AG04449 (cell line): ENCODE measurements at regions of chr14 and their contacts with region 1.

Region 1: GRCh38 chr14:58637391-58638230 is at the start of gene DACT1:
- DNase-seq: no peak
- H3K4me3 ChIP-seq: peak within 1 kb of the TSS; percentile 85
- CTCF ChIP-seq: peak; percentile 8

Region 2: DNA sequence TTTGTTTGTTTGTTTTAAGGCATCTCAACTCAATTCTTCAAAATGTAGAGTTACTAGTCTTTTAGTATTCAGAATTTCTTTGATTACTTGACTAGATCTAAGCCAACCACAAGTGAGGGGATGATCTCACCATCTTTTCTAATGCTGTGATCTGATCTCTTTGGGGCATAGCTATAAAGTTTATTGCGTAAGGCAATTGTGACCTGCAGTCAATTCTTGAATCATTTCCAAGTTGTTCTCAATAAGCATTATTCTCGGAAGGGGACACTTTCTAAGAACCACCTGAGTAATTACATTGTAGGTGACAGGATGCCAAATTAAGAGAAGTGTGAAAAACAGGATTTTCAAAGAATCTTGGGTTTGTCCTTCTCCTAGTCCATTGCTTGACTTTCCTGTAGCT is 13.2 kb after region 1 on chr14:
- CTCF ChIA-PET with region 1: interaction called, 28 read pairs
- POLR2A ChIA-PET with region 1: no interaction called
- DNase-seq: no peak
- H3K4me3 ChIP-seq: no peak overlapping the region
- CTCF ChIP-seq: no peak

Region 3: GRCh38 chr14:59013672-59014298 is 376.2 kb after region 1 on chr14:
- CTCF ChIA-PET with region 1: interaction called, 12 read pairs
- POLR2A ChIA-PET with region 1: no interaction called
- DNase-seq: no peak
- H3K4me3 ChIP-seq: no peak overlapping the region
- CTCF ChIP-seq: no peak

Region 4: GRCh38 chr14:59028476-59029202 is 391.0 kb after region 1 on chr14:
- CTCF ChIA-PET with region 1: interaction called, 30 read pairs
- POLR2A ChIA-PET with region 1: interaction called, 4 read pairs
- DNase-seq: peak; percentile 87
- H3K4me3 ChIP-seq: no peak overlapping the region
- CTCF ChIP-seq: peak; percentile 91

Region 5: GRCh38 chr14:59126710-59127432 is 489.3 kb after region 1 on chr14:
- CTCF ChIA-PET with region 1: interaction called, 24 read pairs
- POLR2A ChIA-PET with region 1: no interaction called
- DNase-seq: no peak
- H3K4me3 ChIP-seq: no peak overlapping the region
- CTCF ChIP-seq: peak; percentile 62